H1 (cell line): ENCODE measurements at regions of chr14 and their contacts with region 1.

Region 1: DNA sequence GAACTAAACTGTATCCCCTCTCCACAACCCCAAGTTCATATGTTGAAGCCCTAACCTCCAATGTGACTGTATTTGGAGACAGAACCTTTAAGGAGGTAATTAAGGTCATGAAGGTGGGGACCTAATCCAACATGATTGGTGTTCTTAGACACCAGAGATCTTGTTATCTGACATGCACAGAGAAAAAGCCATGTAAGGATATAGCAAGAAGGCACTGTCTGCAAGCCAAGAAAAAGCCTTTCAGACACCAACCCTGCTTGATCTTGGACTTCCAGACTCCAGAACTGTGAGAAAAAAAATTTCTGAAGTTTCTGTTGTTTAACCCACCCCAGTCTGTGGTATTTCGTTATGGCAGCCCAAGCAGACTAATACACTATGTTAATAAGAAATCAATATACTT is 62.2 kb upstream of the CFL2 start:
- DNase-seq: no peak
- H3K4me3 ChIP-seq: no peak overlapping the region
- H3K27ac ChIP-seq: no peak overlapping the region
- H3K4me1 ChIP-seq: no peaks in the 10 kb centered on the region
- H3K27me3 ChIP-seq: no peaks in the 10 kb centered on the region
- CTCF ChIP-seq: no peak
- EP300 ChIP-seq: no peak
- POLR2A ChIP-seq: no peak
- RAD21 ChIP-seq: no peak

Region 2: GRCh38 chr14:34766060-34766459 is 10.6 kb before region 1 on chr14:
- CTCF ChIA-PET with region 1: interaction called, 12 read pairs
- POLR2A ChIA-PET with region 1: no interaction called
- DNase-seq: no peak
- H3K4me3 ChIP-seq: no peak overlapping the region
- H3K27ac ChIP-seq: no peak overlapping the region
- H3K4me1 ChIP-seq: no peaks in the 10 kb centered on the region
- H3K27me3 ChIP-seq: no peaks in the 10 kb centered on the region
- CTCF ChIP-seq: peak in 1 of 3 experiments; percentile 26; a peak in 1 of 4 replicates
- EP300 ChIP-seq: no peak
- POLR2A ChIP-seq: no peak
- RAD21 ChIP-seq: no peak